ENCODE measurements at regions of chr12 and their contacts with region 1.

Region 1: DNA sequence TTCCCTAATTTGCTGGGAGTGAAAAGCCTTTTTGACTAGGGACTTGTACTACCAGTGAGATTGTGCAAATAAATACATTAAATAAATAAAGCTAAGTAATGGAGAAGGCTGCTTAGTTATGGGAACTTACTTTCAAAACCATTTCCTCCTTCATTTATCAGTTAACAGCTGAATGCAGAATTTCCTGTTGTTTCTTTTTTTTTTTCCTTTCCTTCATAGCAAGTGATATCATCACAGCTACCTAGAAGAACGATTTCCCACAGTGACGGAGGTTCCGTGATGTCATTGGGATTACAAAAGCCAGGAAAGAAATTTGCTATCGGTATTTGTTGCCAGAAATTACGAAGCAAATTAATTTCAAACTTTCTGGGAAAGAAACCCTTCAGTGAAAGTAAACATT is 42.1 kb upstream of the SOCS2 start:
- DNase-seq: no peak
- H3K4me3 ChIP-seq: no peak overlapping the region
- H3K27ac ChIP-seq: no peak overlapping the region
- H3K4me1 ChIP-seq: no peaks in the 10 kb centered on the region
- H3K27me3 ChIP-seq: no peaks in the 10 kb centered on the region
- CTCF ChIP-seq: no peak
- EP300 ChIP-seq: no peak
- POLR2A ChIP-seq: no peak

Region 2: GRCh38 chr12:93549174-93549573 is 18.8 kb after region 1 on chr12:
- in situ Hi-C with region 1: no loop called
- intact Hi-C with region 1: loop called (anchors 2 kb)
- DNase-seq: no peak
- H3K4me3 ChIP-seq: no peak overlapping the region
- H3K27ac ChIP-seq: no peak overlapping the region
- H3K4me1 ChIP-seq: no peaks in the 10 kb centered on the region
- H3K27me3 ChIP-seq: no peaks in the 10 kb centered on the region
- CTCF ChIP-seq: no peak
- EP300 ChIP-seq: no peak
- POLR2A ChIP-seq: no peak

Region 3: GRCh38 chr12:93634416-93634815 is 104.1 kb after region 1 on chr12:
- in situ Hi-C with region 1: no loop called
- intact Hi-C with region 1: no loop called
- DNase-seq: no peak
- H3K4me3 ChIP-seq: no peak overlapping the region
- H3K27ac ChIP-seq: no peak overlapping the region
- H3K4me1 ChIP-seq: no peaks in the 10 kb centered on the region
- H3K27me3 ChIP-seq: peaks cover 4% of the 10 kb centered on the region
- CTCF ChIP-seq: no peak
- EP300 ChIP-seq: no peak
- POLR2A ChIP-seq: no peak

Region 4: GRCh38 chr12:93645702-93646101 is 115.3 kb after region 1 on chr12:
- in situ Hi-C with region 1: no loop called
- intact Hi-C with region 1: no loop called
- DNase-seq: no peak
- H3K4me3 ChIP-seq: no peak overlapping the region
- H3K27ac ChIP-seq: no peak overlapping the region
- H3K4me1 ChIP-seq: no peaks in the 10 kb centered on the region
- H3K27me3 ChIP-seq: no peaks in the 10 kb centered on the region
- CTCF ChIP-seq: no peak
- EP300 ChIP-seq: no peak
- POLR2A ChIP-seq: no peak

Measured in transverse colon (tissue), 4 donors.